Mammary epithelial cell (primary cell): ENCODE measurements at regions of chr6 and their contacts with region 1.

Region 1: GRCh38 chr6:40738551-40739193 is 151.5 kb upstream of the LRFN2 start:
- DNase-seq: no peak
- H3K4me3 ChIP-seq: no peak overlapping the region
- H3K27ac ChIP-seq: no peak overlapping the region
- H3K4me1 ChIP-seq: no peaks in the 10 kb centered on the region
- H3K27me3 ChIP-seq: peaks cover 5% of the 10 kb centered on the region
- CTCF ChIP-seq: no peak

Region 2: DNA sequence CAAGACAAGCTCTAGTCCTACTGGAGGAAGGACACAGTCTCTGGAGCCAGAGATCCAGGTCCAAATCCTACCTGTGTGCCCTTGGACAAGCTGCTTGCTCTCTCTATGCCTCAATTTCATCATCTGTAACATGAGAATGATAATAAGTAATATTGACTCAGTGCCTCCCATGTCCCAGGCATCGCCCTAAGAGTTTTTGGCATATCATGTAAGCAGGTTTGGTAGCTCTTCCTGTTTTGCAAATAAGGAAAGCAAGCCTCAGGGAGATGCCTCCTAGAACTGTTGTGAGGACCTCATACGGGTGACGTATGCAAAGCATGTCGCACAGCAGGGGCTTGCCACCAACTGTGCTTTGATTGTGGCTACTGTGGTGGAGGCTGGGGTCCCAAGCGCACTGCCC is 89.7 kb before region 1 on chr6:
- CTCF ChIA-PET with region 1: no interaction called
- dilution Hi-C with region 1: loop called (anchors 5 kb)
- in situ Hi-C with region 1: no loop called
- intact Hi-C with region 1: no loop called
- DNase-seq: no peak
- H3K4me3 ChIP-seq: no peak overlapping the region
- H3K27ac ChIP-seq: no peak overlapping the region
- H3K4me1 ChIP-seq: no peaks in the 10 kb centered on the region
- H3K27me3 ChIP-seq: no peaks in the 10 kb centered on the region
- CTCF ChIP-seq: no peak

Region 3: DNA sequence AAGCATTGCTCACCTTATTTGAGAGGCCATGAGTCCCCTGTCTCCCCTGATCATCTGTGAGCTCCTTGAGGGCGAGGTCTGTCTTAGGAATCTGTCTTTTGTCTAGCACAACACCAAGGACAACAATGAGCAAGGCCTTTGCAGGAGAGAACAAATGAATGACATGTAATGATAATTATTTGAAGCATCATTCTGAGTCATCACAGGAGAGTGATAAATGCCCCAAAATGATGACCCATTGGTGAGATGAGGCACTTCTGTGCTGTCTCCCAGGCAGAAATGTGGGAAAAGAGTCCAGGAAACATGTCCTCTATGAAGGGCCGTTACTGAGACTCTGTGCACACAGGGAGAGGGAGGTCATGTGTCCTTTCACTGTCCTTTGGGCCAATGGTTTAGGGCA is 46.3 kb before region 1 on chr6:
- CTCF ChIA-PET with region 1: no interaction called
- dilution Hi-C with region 1: loop called (anchors 5 kb)
- in situ Hi-C with region 1: no loop called
- intact Hi-C with region 1: no loop called
- DNase-seq: no peak
- H3K4me3 ChIP-seq: no peak overlapping the region
- H3K27ac ChIP-seq: no peak overlapping the region
- H3K4me1 ChIP-seq: no peaks in the 10 kb centered on the region
- H3K27me3 ChIP-seq: no peaks in the 10 kb centered on the region
- CTCF ChIP-seq: no peak

Region 4: GRCh38 chr6:40755046-40755681 is 16.5 kb after region 1 on chr6:
- CTCF ChIA-PET with region 1: no interaction called
- dilution Hi-C with region 1: no loop called
- in situ Hi-C with region 1: no loop called
- intact Hi-C with region 1: no loop called
- DNase-seq: no peak
- H3K4me3 ChIP-seq: no peak overlapping the region
- H3K27ac ChIP-seq: no peak overlapping the region
- H3K4me1 ChIP-seq: no peaks in the 10 kb centered on the region
- H3K27me3 ChIP-seq: peaks cover 3% of the 10 kb centered on the region
- CTCF ChIP-seq: no peak